ENCODE measurements at regions of chr12 and their contacts with region 1.

Region 1: DNA sequence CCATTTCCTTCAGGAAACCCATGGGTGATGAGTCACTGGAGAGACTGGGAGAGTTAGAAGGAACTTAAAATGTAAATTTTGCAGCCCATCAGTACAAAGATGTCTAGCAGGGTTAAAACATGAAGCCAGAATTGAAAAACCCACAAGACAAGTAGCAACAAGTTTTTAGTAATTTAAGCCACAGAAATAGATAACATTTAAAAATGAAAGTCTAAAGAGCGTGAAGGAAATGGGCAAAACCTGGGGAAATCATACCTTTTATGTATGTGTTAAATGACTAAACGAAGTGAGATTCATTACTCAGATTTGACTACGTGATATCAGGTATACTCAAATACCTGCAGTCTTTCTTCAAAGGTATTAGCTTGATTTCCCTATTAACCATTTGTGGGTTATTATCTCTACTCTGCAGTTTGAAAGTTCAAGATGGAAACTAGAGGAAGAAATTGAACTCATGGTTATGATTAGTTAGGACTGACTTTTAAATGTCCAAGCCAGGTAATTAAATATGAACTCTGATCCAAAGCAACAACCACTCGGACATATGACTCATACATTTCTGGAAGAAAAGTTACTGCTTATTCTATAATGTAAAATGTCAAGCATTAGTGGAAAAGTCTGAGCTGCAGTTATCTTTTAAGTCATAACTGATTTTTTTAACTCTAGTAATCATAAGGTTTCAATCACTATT is 84.1 kb downstream of the ITPR2 start:
- DNase-seq: no peak
- H3K4me3 Mint-ChIP-seq: peak overlapping the region; percentile 42
- H3K27ac Mint-ChIP-seq: peak overlapping the region; percentile 65
- H3K4me1 Mint-ChIP-seq: peaks cover 57% of the 10 kb centered on the region
- H3K27me3 Mint-ChIP-seq: no peaks in the 10 kb centered on the region

Region 2: GRCh38 chr12:26274441-26275312 is 474.2 kb before region 1 on chr12:
- intact Hi-C with region 1: loop called (anchors 2 kb)
- DNase-seq: peak; percentile 20
- H3K4me3 Mint-ChIP-seq: no peak overlapping the region
- H3K27ac Mint-ChIP-seq: peak overlapping the region; percentile 60
- H3K4me1 Mint-ChIP-seq: peaks cover 26% of the 10 kb centered on the region
- H3K27me3 Mint-ChIP-seq: peaks cover 23% of the 10 kb centered on the region

Region 3: DNA sequence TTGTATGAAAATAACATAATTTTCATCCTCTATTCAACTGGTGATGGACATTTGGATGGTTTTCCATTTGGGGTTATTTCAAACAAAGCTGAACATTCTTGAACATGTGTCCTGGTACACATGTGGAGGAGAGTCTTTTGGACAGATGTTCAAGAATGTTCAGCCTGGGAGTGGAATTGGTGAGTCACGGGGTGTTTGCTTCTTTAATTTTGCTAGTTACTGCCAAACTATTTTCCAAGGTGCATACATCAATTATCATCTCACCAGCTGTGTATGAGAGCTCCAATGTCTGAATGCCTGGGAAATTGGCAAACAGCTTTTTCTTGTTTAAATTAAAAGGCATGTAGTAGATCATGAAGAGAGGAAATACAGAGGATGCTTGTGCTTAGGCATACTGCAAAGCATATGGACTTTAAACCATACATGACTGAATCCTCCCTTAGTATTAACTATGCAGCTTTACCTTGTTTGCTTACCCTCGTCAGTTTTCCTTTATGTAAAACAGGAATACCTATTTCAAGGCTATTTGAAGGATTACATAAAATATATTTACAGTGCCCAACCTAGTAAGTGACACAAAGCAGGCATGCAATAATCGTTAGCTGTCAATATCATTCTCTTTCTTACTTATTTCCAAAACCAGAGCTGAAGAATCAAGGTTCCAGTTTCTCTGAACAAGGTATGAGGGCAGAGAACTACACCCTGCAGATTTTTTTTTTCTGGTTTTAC is 68.0 kb before region 1 on chr12:
- intact Hi-C with region 1: no loop called
- DNase-seq: no peak
- H3K4me3 Mint-ChIP-seq: no peak overlapping the region
- H3K27ac Mint-ChIP-seq: no peak overlapping the region
- H3K4me1 Mint-ChIP-seq: no peaks in the 10 kb centered on the region
- H3K27me3 Mint-ChIP-seq: no peaks in the 10 kb centered on the region

Region 4: GRCh38 chr12:26732005-26732908 is 16.6 kb before region 1 on chr12:
- intact Hi-C with region 1: loop called (anchors 1 kb)
- DNase-seq: no peak
- H3K4me3 Mint-ChIP-seq: no peak overlapping the region
- H3K27ac Mint-ChIP-seq: no peak overlapping the region
- H3K4me1 Mint-ChIP-seq: peaks cover 50% of the 10 kb centered on the region
- H3K27me3 Mint-ChIP-seq: no peaks in the 10 kb centered on the region

Region 5: DNA sequence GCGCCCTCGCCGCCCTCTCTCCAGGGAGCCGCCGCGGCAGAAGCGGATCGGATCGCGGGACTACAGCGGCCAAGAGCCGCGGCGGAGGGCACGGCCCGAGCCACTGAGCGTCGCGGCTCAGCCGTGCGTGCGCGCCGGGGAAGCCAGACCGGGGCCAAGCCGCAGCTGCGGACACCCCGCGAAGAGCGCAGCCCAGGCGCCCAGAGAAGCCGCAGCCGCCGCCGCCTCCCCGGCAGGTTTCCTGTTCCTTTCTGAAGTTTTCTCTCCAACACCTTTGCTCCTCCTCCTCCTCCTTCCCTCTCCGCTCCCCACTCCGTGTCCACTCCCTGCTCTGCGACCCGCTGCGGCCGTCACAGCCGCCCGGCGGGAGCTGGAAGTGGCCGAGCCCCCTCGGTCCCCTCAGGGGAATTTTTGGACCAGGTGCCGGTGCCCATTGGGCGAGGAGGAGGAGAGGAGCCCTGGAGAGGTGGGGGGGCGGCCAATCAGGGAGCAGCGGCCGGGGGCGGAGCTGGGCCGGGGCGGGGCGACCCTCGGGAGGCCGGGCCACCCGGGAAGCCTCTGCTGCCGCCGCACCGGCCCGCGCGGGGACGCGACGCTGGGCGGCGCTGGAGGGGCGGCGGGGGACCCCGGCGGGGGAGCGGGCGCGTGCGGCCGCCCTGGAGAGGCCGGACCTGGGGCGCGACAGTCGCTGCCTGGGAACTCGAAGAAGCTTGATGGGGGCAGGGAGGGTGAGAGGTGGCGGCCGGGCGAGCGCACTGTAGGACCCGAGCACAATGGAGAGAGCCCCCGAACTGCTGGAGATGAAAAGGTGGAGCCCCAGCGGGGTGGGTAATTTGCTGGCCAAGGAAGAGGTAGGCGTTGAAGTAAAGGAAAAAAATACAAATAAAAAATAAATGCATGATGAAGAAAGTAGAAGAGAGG is 84.2 kb after region 1 on chr12 and contains the start of gene ITPR2:
- intact Hi-C with region 1: loop called (anchors 1 kb)
- DNase-seq: peak; percentile 88
- H3K4me3 Mint-ChIP-seq: peak within 1 kb of the TSS; percentile 95
- H3K27ac Mint-ChIP-seq: peak within 1 kb of the TSS; percentile 98
- H3K4me1 Mint-ChIP-seq: peaks cover 46% of the 10 kb centered on the region
- H3K27me3 Mint-ChIP-seq: no peaks in the 10 kb centered on the region
- total RNA-seq, gene ITPR2: 49.3 and 49.6 TPM in 2 replicates

Region 6: GRCh38 chr12:26867080-26867479 is 118.2 kb after region 1 on chr12:
- intact Hi-C with region 1: loop called (anchors 5 kb)
- DNase-seq: no peak
- H3K4me3 Mint-ChIP-seq: no peak overlapping the region
- H3K27ac Mint-ChIP-seq: peak overlapping the region; percentile 61
- H3K4me1 Mint-ChIP-seq: peaks cover 41% of the 10 kb centered on the region
- H3K27me3 Mint-ChIP-seq: peaks cover 2% of the 10 kb centered on the region

Region 7: GRCh38 chr12:26884765-26885576 is 136.1 kb after region 1 on chr12:
- intact Hi-C with region 1: loop called (anchors 2 kb)
- DNase-seq: peak; percentile 78
- H3K4me3 Mint-ChIP-seq: no peak overlapping the region
- H3K27ac Mint-ChIP-seq: no peak overlapping the region
- H3K4me1 Mint-ChIP-seq: peaks cover 16% of the 10 kb centered on the region
- H3K27me3 Mint-ChIP-seq: peaks cover 11% of the 10 kb centered on the region

Region 8: DNA sequence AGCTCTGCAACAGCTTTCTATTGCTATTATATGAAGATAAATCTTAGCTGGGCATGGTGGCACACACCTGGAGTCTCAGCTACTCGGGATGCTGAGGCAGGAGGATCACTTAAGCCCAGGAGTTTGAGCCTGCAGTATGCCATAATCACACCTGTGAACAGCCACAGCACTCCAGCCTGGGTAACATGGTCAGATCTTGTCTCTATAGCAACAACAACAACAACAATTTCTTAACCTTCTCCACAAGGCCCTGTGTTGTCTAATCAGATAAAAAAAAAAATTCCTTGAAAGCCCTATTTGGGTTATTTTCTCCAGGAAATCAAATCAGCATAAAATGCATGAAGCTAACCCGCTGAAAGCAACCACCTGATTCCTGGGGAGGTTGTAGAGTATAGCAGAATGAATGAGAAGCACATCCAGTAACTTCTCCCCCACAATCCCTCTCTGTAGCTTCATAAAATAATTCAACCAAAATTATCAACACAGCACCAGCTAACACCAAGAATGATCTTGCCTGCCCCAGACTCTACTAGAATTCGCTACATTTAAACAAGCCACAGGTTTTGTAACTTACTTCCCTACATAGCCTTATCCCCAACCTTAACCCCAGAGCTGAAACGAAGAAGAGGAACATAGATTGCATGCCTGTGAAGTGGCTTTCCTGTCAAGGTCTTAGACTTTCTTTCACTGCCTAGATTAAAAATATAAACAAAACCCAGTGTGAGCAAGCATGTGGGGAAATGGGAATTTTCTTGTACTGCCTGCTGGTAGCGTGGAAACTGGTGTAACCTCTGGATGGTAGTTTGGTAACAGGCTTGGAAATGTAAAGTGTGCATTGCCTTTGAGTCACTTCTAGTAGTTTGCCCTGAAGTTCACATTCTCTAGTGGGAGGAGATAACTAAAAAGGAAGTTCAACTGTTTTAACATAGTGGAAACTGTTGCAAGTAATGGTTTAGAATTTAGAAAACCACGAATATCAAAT is 489.2 kb after region 1 on chr12:
- intact Hi-C with region 1: loop called (anchors 5 kb)
- DNase-seq: no peak
- H3K4me3 Mint-ChIP-seq: no peak overlapping the region
- H3K27ac Mint-ChIP-seq: peak overlapping the region; percentile 78
- H3K4me1 Mint-ChIP-seq: peaks cover 31% of the 10 kb centered on the region
- H3K27me3 Mint-ChIP-seq: no peaks in the 10 kb centered on the region

Measured in activated T-helper 2 cell treated with anti-CD3 and anti-CD28 coated beads, Interferon-gamma antibody, Interleukin-2, Interleukin-4, amounts not matched to agents 10 μg/mL and 5 μg/mL and 100 μg/mL, durations not matched to agents 14 hours and 24 hours and 36 hours (primary cell).